Panc1 (cell line): ENCODE measurements at regions of chr2 and their contacts with region 1.

Region 1: DNA sequence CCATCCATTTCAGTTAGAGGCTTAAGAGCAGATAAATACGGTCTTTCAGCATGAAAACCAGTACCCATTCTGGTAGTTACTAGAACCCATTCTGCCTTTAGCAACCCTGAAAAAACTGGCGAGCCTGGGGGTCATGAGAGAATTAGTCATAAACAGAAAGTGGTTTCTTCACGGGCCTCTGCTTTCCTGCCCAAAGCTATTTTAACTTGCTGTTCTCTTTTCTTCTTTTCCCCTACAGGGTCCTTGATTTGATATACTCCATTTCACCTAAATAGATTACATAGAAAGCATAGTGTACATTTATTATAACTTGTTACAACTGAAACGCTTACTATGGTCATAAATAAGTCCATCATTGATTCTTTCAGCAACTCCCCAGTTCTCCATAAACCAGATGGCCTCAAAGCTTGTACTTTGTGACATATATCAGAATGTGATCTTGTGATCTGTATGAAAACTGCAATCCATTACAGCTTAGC is 48.3 kb downstream of the WDFY1 start:
- DNase-seq: no peak
- ATAC-seq: no peak
- H3K4me3 ChIP-seq: no peak overlapping the region
- H3K27ac ChIP-seq: no peak overlapping the region
- H3K4me1 ChIP-seq: no peaks in the 10 kb centered on the region
- H3K27me3 ChIP-seq: no peaks in the 10 kb centered on the region
- CTCF ChIP-seq: no peak

Region 2: GRCh38 chr2:223688094-223688835 is 208.6 kb before region 1 on chr2:
- CTCF ChIA-PET with region 1: no interaction called
- POLR2A ChIA-PET with region 1: no interaction called
- in situ Hi-C with region 1: no loop called
- intact Hi-C with region 1: no loop called
- DNase-seq: no peak
- ATAC-seq: no peak
- H3K4me3 ChIP-seq: no peak overlapping the region
- H3K27ac ChIP-seq: no peak overlapping the region
- H3K4me1 ChIP-seq: no peaks in the 10 kb centered on the region; the same call in 1 of the 2 replicates
- H3K27me3 ChIP-seq: no peaks in the 10 kb centered on the region
- CTCF ChIP-seq: no peak

Region 3: GRCh38 chr2:223882715-223883114 is 14.2 kb before region 1 on chr2:
- CTCF ChIA-PET with region 1: no interaction called
- POLR2A ChIA-PET with region 1: interaction called, 10 read pairs
- in situ Hi-C with region 1: no loop called
- intact Hi-C with region 1: no loop called
- DNase-seq: no peak
- ATAC-seq: no peak
- H3K4me3 ChIP-seq: no peak overlapping the region
- H3K27ac ChIP-seq: no peak overlapping the region
- H3K4me1 ChIP-seq: no peaks in the 10 kb centered on the region
- H3K27me3 ChIP-seq: no peaks in the 10 kb centered on the region
- CTCF ChIP-seq: no peak